WTC11 (cell line): ENCODE measurements at regions of chr20 and their contacts with region 1.

Region 1: GRCh38 chr20:34955232-34956040 is at the starts of genes GSS and MYH7B:
- DNase-seq: peak; percentile 100
- ATAC-seq: peak; percentile 98
- H3K4me3 Mint-ChIP-seq: peak within 1 kb of the TSS; percentile 91
- H3K27ac Mint-ChIP-seq: peak within 1 kb of the TSS; percentile 93
- H3K4me1 Mint-ChIP-seq: peaks cover 48% of the 10 kb centered on the region
- H3K27me3 Mint-ChIP-seq: peaks cover 8% of the 10 kb centered on the region
- CTCF ChIP-seq: no peak
- total RNA-seq, gene GSS: 40.7 to 47.3 TPM (median 46.7 TPM) in 3 replicates
- total RNA-seq, gene MYH7B: 0.66 to 1.0 TPM (median 0.98 TPM) in 3 replicates

Region 2: DNA sequence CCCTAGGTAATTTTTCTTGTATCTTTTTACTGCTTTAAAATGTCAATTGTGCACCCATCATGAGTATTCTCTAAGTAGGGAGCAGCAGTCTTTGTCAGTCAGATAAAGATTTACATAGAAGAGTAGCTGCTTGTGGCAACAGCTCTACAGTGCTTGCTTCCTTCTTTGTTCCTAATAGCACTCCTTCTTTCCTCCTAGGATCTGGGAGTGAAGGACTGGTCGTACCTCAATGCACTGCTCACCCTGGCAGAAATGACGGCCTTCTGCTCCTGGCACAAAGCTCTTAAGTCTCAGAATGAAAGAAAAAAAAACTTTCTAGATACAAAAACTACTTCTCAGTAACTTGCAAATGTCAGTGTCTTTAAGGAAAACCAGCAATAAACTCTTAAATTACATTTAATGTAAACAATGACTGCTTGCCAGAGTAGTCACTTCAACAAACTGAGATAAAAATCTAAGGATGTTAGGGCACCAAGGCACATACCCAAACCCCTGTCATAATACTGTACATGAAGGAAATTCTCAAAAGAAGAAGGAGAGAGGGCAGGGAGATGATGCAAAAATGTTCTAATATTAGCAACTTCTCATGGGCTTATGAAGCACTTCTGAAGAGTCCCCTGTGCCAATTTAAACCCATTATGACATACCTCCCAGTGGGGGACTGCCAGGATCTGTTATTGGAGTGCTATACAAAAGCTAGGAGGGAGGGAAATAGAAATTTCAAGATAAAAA is 164.0 kb before region 1 on chr20:
- CTCF ChIA-PET with region 1: no interaction called
- POLR2A ChIA-PET with region 1: no interaction called
- DNase-seq: no peak
- ATAC-seq: peak; percentile 50; the same call in 1 of the 2 replicates
- H3K4me3 Mint-ChIP-seq: no peak overlapping the region
- H3K27ac Mint-ChIP-seq: no peak overlapping the region; the same call in 1 of the 2 replicates
- H3K4me1 Mint-ChIP-seq: peaks cover 7% of the 10 kb centered on the region
- H3K27me3 Mint-ChIP-seq: no peaks in the 10 kb centered on the region
- CTCF ChIP-seq: no peak

Region 3: DNA sequence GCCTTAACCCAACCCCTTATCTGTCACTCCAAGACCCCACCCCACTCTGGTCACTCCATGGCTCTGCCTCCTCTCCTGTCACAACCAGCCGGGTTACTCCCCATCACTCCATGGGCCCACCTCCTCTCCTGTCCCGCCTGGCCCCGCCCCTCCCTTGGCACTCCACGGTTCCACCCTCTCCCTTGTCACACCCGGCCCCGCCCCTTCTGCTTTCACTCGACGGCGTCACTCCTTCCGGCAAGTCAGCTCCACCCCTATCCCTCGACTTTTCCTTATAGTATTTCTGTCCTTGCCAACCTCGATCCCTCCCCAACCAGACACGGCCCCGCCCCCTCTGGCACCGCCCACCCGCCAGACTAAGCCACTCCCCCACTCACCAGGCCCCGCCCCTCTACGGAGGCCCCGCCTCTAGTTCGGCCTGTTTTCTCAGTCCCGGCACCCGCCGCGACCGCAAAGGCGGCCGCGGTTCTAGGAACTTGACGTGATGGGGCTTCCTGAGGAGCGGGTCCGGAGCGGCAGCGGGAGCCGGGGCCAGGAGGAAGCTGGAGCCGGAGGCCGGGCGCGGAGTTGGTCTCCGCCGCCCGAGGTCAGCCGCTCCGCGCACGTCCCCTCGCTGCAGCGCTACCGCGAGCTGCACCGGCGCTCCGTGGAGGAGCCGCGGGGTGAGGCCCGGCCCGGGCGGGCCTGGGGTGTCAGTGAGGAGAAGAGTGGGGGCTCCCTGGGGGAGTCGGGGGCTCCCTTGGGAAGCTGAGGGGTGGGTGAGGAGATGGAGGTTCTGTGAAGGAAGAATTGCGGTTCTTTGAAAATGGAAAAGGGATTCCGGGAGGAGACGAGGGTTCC is 79.1 kb before region 1 on chr20 and contains the start of gene ACSS2:
- CTCF ChIA-PET with region 1: interaction called, 103 read pairs
- POLR2A ChIA-PET with region 1: no interaction called
- DNase-seq: peak; percentile 100
- ATAC-seq: peak; percentile 90
- H3K4me3 Mint-ChIP-seq: peak within 1 kb of the TSS; percentile 98
- H3K27ac Mint-ChIP-seq: peak within 1 kb of the TSS; percentile 98
- H3K4me1 Mint-ChIP-seq: peaks cover 48% of the 10 kb centered on the region
- H3K27me3 Mint-ChIP-seq: peaks cover 34% of the 10 kb centered on the region
- CTCF ChIP-seq: no peak
- total RNA-seq, gene ACSS2: 28.9 to 35.9 TPM (median 29.0 TPM) in 3 replicates

Region 4: DNA sequence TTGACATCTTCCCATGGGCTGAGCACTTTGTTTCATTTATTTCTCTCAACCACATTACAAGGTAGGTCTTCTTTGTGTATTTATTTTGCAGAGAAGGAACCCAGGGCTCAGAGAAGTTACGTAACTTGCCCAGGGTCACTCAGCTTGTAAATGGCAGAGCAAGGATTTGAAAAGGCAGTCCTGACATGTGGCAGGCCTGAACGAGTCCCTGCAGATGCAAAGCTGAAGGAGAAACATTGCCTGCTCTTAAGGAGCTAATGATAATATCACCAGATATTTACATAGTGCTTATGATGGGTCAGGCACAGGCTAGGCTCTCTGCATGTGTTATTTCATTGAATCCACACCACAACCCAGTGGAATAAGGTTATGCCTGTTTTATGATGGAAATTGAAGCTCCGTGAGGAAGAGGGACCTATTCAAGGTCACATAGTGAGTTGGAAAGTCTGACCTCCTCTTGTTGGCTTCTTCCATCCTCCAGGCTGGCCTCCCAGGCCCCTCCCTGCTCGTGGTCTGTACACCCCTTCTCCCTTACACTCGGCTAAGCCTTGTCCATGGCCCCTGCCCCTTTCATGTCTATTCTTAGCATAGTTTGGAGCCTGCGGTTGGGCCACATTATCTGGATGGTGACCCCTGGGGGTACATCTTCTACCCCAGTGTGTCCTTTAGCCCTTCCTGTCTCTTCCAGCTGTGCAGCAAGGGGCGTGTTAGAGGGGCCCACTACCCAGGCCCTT is 12.8 kb after region 1 on chr20:
- CTCF ChIA-PET with region 1: interaction called, 10 read pairs
- POLR2A ChIA-PET with region 1: interaction called, 3 read pairs
- DNase-seq: no peak
- ATAC-seq: no peak
- H3K4me3 Mint-ChIP-seq: no peak overlapping the region
- H3K27ac Mint-ChIP-seq: no peak overlapping the region
- H3K4me1 Mint-ChIP-seq: peaks cover 12% of the 10 kb centered on the region
- H3K27me3 Mint-ChIP-seq: no peaks in the 10 kb centered on the region
- CTCF ChIP-seq: no peak

Region 5: GRCh38 chr20:35001596-35002362 is 46.3 kb after region 1 on chr20:
- CTCF ChIA-PET with region 1: interaction called, 29 read pairs
- POLR2A ChIA-PET with region 1: no interaction called
- DNase-seq: peak; percentile 66
- ATAC-seq: no peak; the same call in 1 of the 2 replicates
- H3K4me3 Mint-ChIP-seq: no peak overlapping the region
- H3K27ac Mint-ChIP-seq: no peak overlapping the region
- H3K4me1 Mint-ChIP-seq: peaks cover 6% of the 10 kb centered on the region
- H3K27me3 Mint-ChIP-seq: no peaks in the 10 kb centered on the region
- CTCF ChIP-seq: no peak